GM10248 (cell line): ENCODE measurements at regions of chr1 and their contacts with region 1.

Region 1: DNA sequence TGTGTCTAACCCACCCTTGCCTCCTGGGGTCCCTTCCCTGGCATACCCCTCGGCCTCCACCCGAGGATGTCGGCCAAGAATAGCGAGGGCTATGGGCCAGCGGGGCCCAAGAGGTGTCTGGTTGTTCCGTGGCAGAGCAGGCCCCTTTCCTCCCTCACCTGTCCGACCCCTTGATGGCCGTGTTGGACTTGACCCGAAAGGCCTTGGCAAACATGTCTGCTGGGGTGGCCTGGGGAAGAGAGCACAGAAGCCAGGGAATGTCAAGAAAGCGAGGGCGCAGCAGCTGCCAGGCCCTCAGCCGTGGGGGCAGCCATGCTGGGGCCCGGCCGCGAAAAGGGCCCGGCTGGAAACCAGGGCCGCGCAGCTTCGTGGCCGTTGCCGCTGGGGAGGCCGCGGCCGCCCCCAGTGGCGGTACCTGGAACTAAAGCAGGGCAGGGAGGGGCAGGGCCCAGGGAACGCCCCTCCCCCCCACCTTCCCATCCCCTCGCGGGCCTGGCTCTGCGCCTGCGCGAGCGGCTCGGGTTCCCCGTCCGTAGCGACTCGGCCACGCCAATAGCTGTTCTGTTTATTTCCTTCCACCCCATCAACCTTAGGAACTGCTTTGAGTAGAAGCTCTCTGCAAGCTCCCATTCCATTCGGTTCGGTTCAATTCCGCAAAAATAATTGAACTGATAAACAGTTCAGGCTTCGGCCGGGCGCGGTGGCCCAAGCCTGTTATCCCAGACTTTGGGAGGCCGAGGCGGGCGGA is at the start of gene EIF2D:
- DNase-seq: peak; percentile 100
- CTCF ChIP-seq: peak; percentile 95

Region 2: DNA sequence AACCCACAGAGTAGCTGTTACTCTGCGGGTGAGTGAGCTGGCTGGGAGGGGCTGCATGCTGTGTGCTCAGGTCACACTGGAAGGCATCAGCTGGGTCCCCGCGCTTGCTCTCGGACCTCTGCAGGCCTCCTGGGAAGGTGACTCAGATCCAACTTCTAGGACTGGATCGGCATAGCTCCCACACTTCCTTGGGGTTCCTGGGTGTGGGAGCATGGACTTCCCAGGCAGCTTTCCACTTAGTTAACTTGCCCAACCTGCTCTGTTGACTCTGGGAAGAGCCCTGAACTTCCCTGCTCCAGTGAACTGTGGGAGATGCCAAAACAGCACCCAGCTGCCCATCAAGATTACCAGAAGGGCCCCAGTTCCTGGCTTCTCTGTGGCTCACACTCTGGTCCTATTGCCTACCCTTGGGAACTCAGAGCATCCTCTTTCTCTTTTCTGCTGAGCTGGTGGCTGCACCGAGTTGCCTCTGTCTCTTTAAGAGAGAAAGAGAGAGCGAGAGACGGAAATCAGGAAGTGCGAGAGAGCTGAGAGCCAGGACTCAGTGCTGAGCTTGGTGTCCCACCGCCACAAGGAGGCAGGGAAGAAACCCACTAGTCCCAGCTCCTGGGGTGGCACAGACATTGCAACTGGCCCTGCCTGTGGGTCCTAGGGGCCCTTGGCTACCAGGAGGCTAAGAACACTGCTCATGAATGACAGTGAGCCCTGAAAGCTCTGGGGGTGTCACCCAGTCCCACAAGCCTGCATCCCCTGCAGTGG is 142.2 kb before region 1 on chr1 and contains the start of gene IKBKE:
- CTCF ChIA-PET with region 1: interaction called, 11 read pairs
- POLR2A ChIA-PET with region 1: no interaction called
- DNase-seq: peak; percentile 80
- CTCF ChIP-seq: no peak

Region 3: DNA sequence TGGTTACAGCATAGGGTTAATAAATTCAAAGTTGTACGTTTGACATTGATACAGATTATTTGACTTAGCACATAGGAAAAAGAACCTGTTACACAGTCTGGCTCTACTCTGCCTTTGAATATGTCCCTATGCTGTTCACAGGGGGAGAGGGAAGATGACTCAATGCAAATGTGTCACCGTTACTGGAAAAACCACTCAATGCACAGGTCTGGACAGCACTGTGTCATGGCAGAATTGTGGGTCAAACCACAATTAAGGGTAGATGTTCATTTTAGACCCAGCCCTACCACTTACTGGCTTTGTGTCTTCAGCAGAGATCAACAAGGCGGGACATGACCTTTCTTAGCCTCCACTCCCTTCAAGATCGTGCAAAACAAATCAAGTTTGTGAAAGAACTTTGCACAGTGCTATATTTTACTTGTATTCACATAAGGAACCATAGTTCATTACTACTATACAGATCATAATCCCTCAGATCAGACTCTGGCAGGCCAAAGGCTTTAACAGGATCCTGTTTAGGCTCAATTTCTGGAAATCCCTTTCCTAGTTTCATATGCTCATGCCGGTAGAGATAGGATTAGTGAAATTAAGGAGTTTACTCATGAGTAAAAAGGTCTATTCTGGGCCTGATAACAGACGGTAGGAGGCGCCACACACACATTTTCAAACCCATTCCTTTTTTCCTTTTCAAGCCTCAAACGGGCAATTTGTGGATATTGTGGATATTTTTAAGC is 22.1 kb before region 1 on chr1:
- CTCF ChIA-PET with region 1: interaction called, 46 read pairs
- POLR2A ChIA-PET with region 1: no interaction called
- DNase-seq: peak; percentile 54
- CTCF ChIP-seq: peak; percentile 41

Region 4: GRCh38 chr1:206628916-206629315 is 16.6 kb after region 1 on chr1:
- CTCF ChIA-PET with region 1: interaction called, 26 read pairs
- POLR2A ChIA-PET with region 1: no interaction called
- DNase-seq: no peak
- CTCF ChIP-seq: no peak

Region 5: GRCh38 chr1:206674745-206675175 is 62.5 kb after region 1 on chr1:
- CTCF ChIA-PET with region 1: interaction called, 10 read pairs
- POLR2A ChIA-PET with region 1: no interaction called
- DNase-seq: no peak
- CTCF ChIP-seq: no peak